Heart right ventricle (tissue), 16 donors: ENCODE measurements at regions of chr17 and their contacts with region 1.

Region 1: DNA sequence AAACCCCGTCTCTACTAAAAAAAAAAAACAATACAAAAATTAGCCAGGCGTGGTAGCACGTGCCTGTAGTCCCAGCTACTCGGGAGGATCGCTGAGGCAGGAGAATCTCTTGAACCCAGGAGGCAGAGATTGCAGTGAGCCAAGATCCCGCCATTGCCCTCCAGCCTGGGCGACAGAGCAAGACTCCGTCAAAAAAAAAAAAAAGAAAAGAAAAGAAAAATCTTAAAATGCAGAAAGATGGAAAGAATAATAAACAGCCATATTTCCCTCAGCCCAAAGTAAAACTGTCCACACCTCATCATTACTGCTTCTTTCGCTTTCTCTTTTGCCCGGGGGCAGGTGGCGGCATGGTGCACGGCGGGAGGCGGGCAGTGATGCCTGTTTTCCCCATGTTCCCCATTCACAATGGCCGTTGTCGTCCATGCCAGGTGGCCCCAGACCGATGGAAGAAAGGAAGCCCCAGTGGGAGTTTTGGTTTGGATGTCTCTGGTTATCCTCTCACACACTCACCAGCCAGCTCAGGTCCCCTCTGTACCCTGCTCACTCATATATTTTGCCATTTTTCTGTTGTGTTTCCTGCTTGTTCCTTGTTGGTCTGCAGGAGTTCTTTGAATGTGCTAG is 37.0 kb upstream of the PEMT start:
- DNase-seq: no peak
- ATAC-seq: no peak
- H3K4me3 ChIP-seq: peak overlapping the region in 1 of 10 donors; percentile 34
- H3K27ac ChIP-seq: peak overlapping the region in 1 of 10 donors; percentile 58
- H3K4me1 ChIP-seq: peaks cover 0 to 6% (median 0%) of the 10 kb centered on the region in 9 donors
- H3K27me3 ChIP-seq: no peaks in the 10 kb centered on the region
- CTCF ChIP-seq: no peak

Region 2: GRCh38 chr17:17246879-17247278 is 381.6 kb before region 1 on chr17:
- intact Hi-C with region 1: loop called in 1 of 10 experiments (anchors 5 kb)
- DNase-seq: no peak
- ATAC-seq: no peak
- H3K4me3 ChIP-seq: no peak overlapping the region
- H3K27ac ChIP-seq: no peak overlapping the region
- H3K4me1 ChIP-seq: no peaks in the 10 kb centered on the region
- H3K27me3 ChIP-seq: no peaks in the 10 kb centered on the region
- CTCF ChIP-seq: no peak

Region 3: DNA sequence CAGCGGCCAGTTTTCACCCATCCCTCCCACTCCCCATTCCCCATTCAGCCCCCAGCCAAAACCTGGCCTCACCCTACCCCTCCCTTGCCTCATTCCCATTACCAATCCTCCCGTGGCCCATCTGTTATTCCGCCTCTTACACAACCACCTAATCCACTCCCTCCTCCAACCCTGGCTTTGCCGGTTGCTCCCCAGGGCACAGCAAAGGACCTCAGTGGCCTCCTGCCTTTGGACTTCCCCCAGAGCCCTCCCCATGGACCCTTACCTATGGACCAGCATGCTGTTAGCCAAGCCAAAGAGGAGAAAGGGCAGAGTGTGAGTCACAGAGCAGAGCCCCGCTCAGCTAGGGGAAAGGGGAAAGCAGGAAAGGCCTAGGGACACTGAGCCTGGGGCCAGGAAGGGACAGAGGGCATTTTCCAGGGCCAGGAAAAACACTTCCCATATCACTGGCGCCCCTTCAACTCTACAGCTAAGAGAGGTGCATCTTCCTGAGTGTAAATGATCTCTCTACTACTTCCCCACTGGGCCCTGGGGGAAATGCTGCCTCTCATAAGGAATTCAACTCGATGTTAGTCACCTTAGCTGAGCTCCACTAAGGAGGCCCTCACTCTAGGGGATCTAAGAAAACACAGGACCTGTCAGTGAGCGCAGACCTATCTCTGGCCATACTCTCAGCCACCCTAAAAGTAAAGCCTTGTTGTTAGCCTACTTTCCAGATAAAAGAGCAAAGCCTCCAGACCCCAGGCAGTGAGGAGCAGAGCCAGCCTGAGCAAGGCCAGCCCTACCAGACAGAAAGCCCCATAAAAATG is 47.6 kb before region 1 on chr17:
- intact Hi-C with region 1: no loop called
- DNase-seq: no peak
- ATAC-seq: peak in 3 of 8 donors; percentile 25 to 78 (median 26)
- H3K4me3 ChIP-seq: no peak overlapping the region
- H3K27ac ChIP-seq: peak overlapping the region in 1 of 10 donors; percentile 20
- H3K4me1 ChIP-seq: peaks cover 0 to 15% (median 0%) of the 10 kb centered on the region in 9 donors
- H3K27me3 ChIP-seq: no peaks in the 10 kb centered on the region
- CTCF ChIP-seq: no peak

Region 4: DNA sequence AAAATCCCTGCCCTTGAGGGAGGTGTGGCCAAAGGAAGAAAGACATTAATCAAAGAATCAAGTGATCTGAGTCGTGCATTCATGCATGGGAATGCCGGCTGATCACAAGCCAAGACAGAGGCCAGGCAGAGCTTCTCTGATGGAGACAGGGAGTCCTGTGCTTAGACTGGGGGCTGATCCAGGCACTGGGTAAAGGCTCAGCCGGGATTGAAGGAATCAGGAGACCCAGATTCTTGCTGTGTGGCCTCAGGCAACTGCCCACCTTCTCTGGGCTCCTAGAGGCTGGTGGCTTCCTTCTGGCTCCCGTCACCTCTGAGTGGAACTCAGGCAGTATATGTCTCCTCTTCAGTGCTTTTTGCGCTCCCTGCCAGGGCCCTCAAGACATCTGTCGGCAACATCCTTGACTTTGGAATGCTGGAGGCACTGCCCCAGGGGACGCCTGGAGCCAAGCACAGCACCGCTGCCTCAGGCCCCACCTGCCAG is 70.4 kb after region 1 on chr17:
- intact Hi-C with region 1: no loop called
- DNase-seq: no peak
- ATAC-seq: no peak
- H3K4me3 ChIP-seq: no peak overlapping the region
- H3K27ac ChIP-seq: peak overlapping the region in 9 of 10 donors; percentile 26 to 100 (median 70)
- H3K4me1 ChIP-seq: peaks cover 28 to 96% (median 90%) of the 10 kb centered on the region in 9 donors
- H3K27me3 ChIP-seq: peaks cover 0 to 11% (median 0%) of the 10 kb centered on the region in 7 donors
- CTCF ChIP-seq: no peak